ENCODE measurements at regions of chr12 and their contacts with region 1.

Region 1: GRCh38 chr12:51424662-51425438 is at the start of gene SLC4A8:
- DNase-seq: peak; percentile 95
- CTCF ChIP-seq: peak; percentile 89

Region 2: DNA sequence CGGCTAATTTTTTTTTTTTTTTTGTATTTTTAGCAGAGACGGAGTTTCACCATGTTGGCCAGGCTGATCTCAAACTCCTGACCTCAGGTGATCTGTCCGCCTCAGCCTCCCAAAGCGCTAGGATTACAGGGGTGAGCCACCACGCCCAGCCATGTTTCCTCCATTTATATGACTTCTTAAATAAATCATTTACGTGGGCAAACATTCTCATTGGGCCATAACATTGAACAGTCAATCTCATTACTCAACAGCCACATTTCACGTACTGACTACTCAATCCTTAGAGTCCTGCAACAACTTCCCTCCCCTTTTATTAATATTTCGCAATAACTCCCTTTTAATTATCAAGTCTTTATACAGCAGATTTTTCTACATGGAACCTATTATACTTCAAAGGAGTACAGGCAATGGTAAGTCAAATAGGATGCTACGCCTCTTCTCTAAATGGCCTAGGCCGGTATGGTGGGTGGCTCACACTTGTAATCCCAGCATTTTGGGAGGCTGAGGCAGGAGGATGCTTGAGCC is 334.1 kb before region 1 on chr12:
- CTCF ChIA-PET with region 1: no interaction called
- POLR2A ChIA-PET with region 1: no interaction called
- DNase-seq: no peak
- CTCF ChIP-seq: no peak

Region 3: GRCh38 chr12:51393676-51394545 is 30.9 kb before region 1 on chr12:
- CTCF ChIA-PET with region 1: interaction called, 17 read pairs
- POLR2A ChIA-PET with region 1: no interaction called
- DNase-seq: no peak
- CTCF ChIP-seq: no peak

Region 4: GRCh38 chr12:51409846-51410245 is 15.0 kb before region 1 on chr12:
- CTCF ChIA-PET with region 1: interaction called, 23 read pairs
- POLR2A ChIA-PET with region 1: no interaction called
- DNase-seq: no peak
- CTCF ChIP-seq: no peak

Region 5: GRCh38 chr12:51531978-51532497 is 107.2 kb after region 1 on chr12:
- CTCF ChIA-PET with region 1: interaction called, 399 read pairs
- POLR2A ChIA-PET with region 1: no interaction called
- DNase-seq: peak; percentile 86
- CTCF ChIP-seq: peak; percentile 94

Region 6: DNA sequence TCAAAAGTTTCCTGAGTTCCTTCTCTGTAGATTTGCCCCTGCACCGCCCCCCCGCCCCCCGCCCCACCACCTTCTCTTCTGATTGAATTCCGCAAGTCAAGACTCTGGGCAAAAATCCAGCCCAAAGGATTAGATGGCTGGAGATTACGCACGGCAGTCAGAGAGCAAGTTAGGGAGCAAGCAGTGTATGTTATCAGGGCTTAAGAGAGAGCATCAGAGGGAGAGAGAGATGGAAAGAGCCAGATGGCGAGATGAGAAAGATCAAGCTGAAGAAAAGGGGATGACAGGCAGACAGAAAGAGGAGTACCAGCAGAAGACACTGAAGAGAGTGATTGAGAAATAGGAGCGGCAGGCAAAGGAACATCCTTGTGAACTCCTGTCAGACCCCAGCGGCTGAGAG is 449.2 kb after region 1 on chr12:
- CTCF ChIA-PET with region 1: interaction called, 18 read pairs
- POLR2A ChIA-PET with region 1: no interaction called
- DNase-seq: no peak
- CTCF ChIP-seq: no peak

Measured in GM10248 (cell line).